ENCODE measurements at regions of chr11 and their contacts with region 1.

Region 1: DNA sequence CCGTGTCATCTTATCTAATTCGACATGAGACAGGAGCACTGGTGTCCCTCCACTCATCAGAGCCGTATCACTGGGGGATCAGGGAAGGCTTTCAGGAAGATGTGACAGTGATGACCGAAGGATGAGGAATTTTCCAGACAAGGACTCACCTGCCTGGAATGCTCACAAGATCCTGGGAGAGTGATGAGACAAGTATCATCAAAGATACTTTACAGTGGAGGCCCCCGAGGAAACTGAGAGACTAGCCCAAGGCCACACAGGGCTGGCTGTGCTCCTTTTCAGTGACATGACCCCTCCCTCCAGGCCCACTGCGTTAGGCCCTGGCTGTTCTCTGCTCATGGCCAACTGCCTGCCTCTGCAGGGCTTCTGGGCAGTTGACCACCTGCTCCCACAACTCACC is 13.0 kb downstream of the CLPB start:
- DNase-seq: no peak
- H3K4me3 ChIP-seq: no peak overlapping the region
- H3K27ac ChIP-seq: no peak overlapping the region
- H3K27me3 ChIP-seq: no peaks in the 10 kb centered on the region
- CTCF ChIP-seq: no peak

Region 2: DNA sequence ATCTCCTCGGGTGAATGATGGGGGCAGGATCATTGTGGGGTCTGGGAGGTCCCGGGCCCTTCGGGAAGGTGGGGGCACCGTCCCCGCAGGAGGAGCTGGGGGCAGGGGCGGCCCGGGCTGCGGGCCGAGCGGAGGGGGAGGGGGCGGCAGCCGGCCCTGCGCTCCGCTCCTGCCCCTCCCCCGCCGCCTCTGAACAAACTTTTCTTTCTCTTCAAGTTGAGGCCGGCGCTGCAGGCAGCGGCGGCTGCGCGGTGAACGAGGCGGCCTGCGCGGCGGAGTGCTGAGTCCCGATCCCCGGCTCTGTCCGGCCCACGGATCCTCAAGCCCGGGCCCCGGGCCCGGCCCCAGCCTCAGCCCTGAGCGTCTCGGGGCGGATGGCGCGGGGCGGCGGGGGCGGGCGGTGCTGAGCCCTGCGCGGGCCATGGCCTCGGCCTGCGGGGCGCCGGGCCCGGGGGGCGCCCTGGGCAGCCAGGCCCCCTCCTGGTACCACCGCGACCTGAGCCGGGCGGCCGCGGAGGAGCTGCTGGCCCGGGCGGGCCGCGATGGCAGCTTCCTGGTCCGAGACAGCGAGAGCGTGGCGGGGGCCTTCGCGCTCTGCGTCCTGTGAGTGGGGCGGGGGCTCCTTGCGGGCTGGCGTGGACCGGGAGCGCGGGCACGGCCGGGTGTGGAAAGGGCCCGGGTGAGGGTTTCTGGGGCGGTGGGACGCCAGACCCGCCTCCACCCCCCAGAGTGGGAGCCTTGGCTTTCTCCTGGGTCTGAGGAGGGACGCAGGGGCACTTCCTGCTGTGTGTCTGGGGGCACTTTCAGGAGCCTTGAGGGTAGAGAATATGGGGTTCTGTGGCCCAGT is 196.6 kb before region 1 on chr11 and contains the start of gene INPPL1:
- intact Hi-C with region 1: loop called in 1 of 2 experiments (anchors 5 kb)
- DNase-seq: peak in 4 of 10 donors; percentile 10 to 61 (median 52)
- H3K4me3 ChIP-seq: peak within 1 kb of the TSS; percentile 60 to 95 (median 82)
- H3K27ac ChIP-seq: peak within 1 kb of the TSS in 58 of 59 donors; percentile 61 to 97 (median 91)
- H3K27me3 ChIP-seq: no peaks in the 10 kb centered on the region
- CTCF ChIP-seq: peak in 4 of 56 donors; percentile 12 to 17 (median 14)
- total RNA-seq, gene INPPL1: 45.2 to 209 (median 78.5) TPM

Region 3: DNA sequence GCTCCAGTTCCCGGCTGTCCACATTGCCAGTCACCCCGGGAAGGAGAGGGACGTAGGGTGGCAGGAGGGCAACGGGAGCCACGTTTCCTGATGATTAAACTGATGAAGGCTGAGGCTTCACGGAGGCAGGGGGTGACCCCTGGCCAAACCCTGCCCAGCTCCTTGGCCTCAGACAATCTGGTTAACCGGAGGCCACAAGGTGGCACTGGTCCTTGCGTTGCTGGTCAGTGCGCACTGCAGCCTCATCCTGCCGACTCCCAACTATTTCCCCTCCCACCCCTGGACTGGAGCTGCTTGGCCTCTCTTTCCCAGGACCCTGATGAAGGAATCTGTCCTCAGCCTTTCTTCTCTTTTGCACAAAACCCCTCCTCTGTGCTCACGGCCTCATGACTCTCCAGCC is 177.6 kb after region 1 on chr11:
- intact Hi-C with region 1: no loop called
- DNase-seq: peak in 6 of 10 donors; percentile 47 to 74 (median 54)
- H3K4me3 ChIP-seq: no peak overlapping the region
- H3K27ac ChIP-seq: peak overlapping the region in 25 of 59 donors; percentile 1 to 66 (median 24)
- H3K27me3 ChIP-seq: no peaks in the 10 kb centered on the region
- CTCF ChIP-seq: peak; percentile 22 to 80 (median 64)